Head of caudate nucleus (tissue), 42 donors: ENCODE measurements at regions of chr5 and their contacts with region 1.

Region 1: DNA sequence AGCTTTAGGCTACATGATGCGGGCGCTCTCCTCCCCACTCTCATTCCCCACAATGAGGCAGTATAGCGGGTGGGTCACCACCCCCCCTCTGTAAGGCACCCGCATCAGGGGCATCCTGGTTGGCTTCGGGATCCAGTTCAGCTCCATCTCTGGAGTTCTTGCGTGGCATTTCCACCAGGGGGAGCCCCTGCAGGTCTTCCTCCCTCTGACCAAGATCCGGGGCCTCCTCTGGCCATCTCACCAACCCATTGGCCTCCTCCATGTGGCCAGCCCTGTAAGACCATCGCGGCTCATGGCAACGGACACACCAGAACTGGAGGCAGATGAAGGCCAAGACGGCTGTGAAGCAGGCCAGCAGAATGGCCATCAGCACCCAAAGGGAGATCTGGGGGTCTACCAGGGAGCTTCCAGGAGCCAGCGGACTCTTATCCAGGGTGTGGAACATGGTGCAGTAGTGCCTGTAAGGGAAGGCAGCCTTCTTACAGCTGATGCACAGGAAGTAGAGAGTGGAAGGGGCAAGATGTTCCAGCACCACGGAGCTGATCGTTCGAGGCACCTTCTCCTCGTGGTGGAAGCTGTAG is 77.0 kb downstream of the CYFIP2 start:
- DNase-seq: peak in 20 of 42 donors; percentile 16 to 67 (median 36)

Region 2: GRCh38 chr5:157303667-157304327 is 39.1 kb before region 1 on chr5:
- intact Hi-C with region 1: no loop called
- DNase-seq: peak in 4 of 42 donors; percentile 23 to 40 (median 34)

Region 3: GRCh38 chr5:157476702-157477408 is 133.9 kb after region 1 on chr5:
- intact Hi-C with region 1: loop called (anchors 10 kb)
- DNase-seq: peak in 29 of 42 donors; percentile 36 to 85 (median 66)